Posterior vena cava (tissue), 2 donors: ENCODE measurements at regions of chr5 and their contacts with region 1.

Region 1: DNA sequence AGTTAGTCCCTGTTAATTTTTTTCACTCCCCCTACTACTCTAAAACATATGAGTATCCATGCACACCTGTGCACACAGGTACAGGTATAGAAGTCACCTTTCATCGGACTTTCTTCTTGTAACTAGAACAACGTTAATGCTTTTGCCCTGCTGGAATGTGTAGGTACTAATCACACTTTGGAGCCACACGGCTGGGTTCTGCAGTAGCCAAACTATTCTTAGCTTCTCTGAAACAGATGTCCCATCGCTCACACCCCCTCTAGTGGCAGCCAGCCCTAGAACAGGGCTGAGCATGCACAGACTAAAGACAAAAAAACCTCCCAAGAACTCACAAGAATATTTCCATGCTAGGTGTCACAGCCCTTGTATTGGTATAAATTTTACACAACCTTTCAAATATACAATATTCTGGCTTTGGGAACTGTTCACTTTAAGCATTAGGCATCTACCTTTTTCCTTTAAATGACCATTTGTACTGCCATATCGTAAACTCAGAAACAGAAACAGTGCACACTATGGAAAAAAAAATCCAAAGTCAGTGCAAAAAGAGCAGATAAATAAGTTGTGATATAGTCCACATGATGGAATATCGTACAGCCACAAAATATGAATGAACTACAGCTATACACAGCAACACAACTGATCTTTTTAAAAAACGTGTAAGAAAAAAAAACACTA is 64.0 kb downstream of the RETREG1 start:
- DNase-seq: peak; percentile 89

Region 2: GRCh38 chr5:16492391-16493175 is 60.2 kb before region 1 on chr5:
- intact Hi-C with region 1: loop called in 1 of 2 experiments (anchors 10 kb)
- DNase-seq: no peak

Region 3: GRCh38 chr5:16539169-16539721 is 13.6 kb before region 1 on chr5:
- intact Hi-C with region 1: no loop called
- DNase-seq: peak; percentile 91

Region 4: GRCh38 chr5:16593013-16593412 is 40.2 kb after region 1 on chr5:
- intact Hi-C with region 1: loop called in 1 of 2 experiments (anchors 1 kb)
- DNase-seq: no peak